ENCODE measurements at regions of chr1 and their contacts with region 1.

Region 1: DNA sequence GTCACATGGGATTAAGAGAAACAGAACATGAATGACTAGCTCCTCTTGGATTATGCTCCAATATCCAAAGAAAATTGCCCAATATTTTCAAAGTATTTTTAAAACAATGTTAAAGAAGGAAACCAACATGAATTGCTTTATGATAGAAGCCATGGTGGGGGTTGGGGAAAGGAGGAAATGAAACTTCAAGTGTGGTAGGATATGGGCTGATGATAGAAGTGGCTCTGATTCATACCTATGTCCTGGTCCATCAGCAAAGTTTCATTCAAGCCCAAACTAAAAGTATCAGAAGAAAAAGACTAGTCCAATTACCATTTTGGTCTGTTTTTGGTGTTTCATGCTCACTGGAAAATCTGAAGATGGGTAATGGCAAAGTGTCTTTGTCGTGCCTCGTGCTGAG is 104.2 kb upstream of the PROX1 start:
- DNase-seq: no peak
- H3K4me3 ChIP-seq: no peak overlapping the region
- H3K27ac ChIP-seq: peak overlapping the region in 39 of 59 donors; percentile 19 to 92 (median 82)
- H3K27me3 ChIP-seq: peaks cover 0 to 2% (median 0%) of the 10 kb centered on the region in 45 donors
- CTCF ChIP-seq: no peak

Region 2: GRCh38 chr1:213345621-213346020 is 538.0 kb before region 1 on chr1:
- intact Hi-C with region 1: no loop called
- DNase-seq: no peak
- H3K4me3 ChIP-seq: no peak overlapping the region
- H3K27ac ChIP-seq: no peak overlapping the region
- H3K27me3 ChIP-seq: no peaks in the 10 kb centered on the region
- CTCF ChIP-seq: no peak

Region 3: GRCh38 chr1:213817156-213817555 is 66.5 kb before region 1 on chr1:
- intact Hi-C with region 1: no loop called
- DNase-seq: no peak
- H3K4me3 ChIP-seq: no peak overlapping the region
- H3K27ac ChIP-seq: no peak overlapping the region
- H3K27me3 ChIP-seq: peaks cover 0 to 5% (median 0%) of the 10 kb centered on the region in 45 donors
- CTCF ChIP-seq: no peak

Region 4: DNA sequence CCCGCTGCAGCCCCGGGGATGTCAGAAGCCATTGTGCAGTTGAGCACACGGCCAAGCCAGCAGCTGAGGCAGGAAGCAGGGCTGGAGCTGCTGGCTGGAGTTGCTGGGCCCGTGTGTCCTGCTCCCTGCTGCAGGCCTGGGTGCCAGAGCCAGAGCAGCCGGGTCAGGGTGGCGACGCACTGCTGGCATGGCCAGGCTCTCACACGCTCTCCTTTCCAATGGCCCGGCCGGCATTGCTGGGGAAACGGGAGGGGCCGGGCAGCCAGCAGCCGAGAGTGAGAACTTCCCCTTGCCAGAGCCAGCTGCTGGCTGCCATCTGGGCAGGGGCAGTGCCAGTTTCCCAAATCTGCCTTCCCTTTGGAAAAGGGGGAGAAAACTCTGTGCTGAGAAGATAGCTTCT is 21.7 kb after region 1 on chr1:
- intact Hi-C with region 1: loop called in 1 of 2 experiments (anchors 2 kb)
- DNase-seq: peak; percentile 10 to 79 (median 60)
- H3K4me3 ChIP-seq: peak overlapping the region in 31 of 59 donors; percentile 1 to 49 (median 24)
- H3K27ac ChIP-seq: peak overlapping the region in 55 of 59 donors; percentile 17 to 88 (median 73)
- H3K27me3 ChIP-seq: no peaks in the 10 kb centered on the region
- CTCF ChIP-seq: peak in 1 of 56 donors; percentile 12

Region 5: DNA sequence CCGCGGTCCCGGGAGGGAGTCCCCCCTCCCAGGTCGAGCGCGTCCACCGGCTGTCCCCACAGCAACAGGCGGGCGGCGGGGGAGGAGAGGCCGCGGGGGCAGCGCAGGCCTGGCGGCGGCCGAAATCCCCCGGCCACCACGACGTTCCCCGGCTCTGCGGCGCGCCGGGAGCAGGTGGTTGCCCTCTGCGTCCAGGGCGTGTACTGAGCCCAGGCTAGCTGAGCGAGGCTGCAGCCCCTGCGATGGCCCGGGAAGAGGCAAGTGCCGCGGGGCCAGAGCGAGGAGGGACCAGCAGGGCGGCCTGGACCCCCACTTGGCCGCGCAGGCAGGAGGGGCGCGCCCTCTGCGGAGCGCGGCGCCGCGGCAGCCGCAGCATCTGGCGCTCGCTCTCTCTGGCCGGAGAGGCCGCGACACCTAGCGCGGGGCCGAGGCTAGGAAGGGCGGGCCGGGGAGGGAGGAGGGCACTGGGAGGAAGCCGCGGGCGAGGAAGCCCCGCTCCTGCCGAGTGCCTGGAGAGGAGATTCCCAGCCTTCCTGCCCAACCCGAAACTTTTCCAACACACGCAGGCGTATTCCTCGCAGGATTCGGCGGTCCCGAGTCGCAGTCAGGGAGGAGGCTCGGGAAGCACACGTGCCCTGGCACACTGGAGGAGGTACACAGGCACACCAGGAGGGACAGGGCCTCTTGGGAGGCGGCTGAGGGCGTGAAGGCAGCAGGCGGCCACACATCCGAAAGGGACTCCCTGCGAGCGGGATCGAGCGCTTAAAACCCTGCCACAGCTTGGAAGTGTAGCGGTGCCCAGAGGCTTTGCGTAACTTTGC is 99.3 kb after region 1 on chr1:
- intact Hi-C with region 1: loop called in 1 of 2 experiments (anchors 5 kb)
- DNase-seq: peak in 3 of 10 donors; percentile 47 to 69 (median 64)
- H3K4me3 ChIP-seq: peak overlapping the region; percentile 29 to 79 (median 63)
- H3K27ac ChIP-seq: peak overlapping the region in 53 of 59 donors; percentile 23 to 84 (median 69)
- H3K27me3 ChIP-seq: peaks cover 0 to 95% (median 60%) of the 10 kb centered on the region in 45 donors
- CTCF ChIP-seq: peak in 41 of 56 donors; percentile 8 to 66 (median 29)